Heart left ventricle (tissue), 16 donors: ENCODE measurements at regions of chr2 and their contacts with region 1.

Region 1: DNA sequence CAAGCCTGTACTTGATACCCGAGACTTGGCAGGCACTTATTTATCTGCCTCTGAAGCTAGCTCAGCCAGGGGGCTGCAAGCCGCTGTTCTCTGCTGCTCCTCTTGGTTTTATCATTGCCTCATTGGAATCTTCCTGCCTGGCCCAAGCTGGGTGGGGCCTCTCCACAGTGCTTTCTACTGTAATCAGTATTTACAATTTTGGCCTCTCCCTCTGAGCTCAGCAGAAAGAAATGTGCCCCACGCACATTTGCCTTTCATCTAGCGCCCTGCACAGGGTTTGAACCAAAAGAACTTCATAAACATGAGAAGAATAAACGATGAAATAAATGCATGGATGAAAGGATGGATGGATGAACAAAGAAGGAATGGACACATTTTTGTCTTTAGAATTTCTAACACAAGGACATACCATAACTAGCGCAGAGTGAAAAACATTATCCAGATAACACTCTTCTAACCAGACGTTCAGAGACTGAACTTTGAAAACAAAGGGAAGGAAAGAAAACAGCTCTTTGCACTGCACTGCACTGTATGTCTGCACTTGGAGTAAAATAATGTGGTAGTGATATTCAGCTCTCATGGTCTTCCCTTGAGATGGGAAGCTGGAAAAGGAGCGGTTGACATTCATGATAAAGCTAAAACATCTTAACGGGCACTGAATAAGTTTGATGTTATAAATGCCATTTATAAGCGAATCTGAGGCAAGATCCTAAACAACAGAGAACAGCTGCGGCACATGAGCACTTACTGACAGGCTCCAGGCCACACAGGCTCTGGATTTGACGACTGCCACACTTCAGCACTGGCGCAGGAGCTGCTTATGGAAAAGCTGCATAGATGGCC is 86.8 kb upstream of the SP3 start:
- DNase-seq: peak in 2 of 5 donors; percentile 31 to 45
- ATAC-seq: peak; percentile 65 to 89 (median 82)
- H3K4me3 ChIP-seq: peak overlapping the region in 1 of 12 donors; percentile 24
- H3K27ac ChIP-seq: peak overlapping the region in 6 of 12 donors; percentile 18 to 49 (median 40)
- H3K4me1 ChIP-seq: peaks cover 0 to 30% (median 16%) of the 10 kb centered on the region in 12 donors
- H3K27me3 ChIP-seq: no peaks in the 10 kb centered on the region
- CTCF ChIP-seq: no peak
- POLR2A ChIP-seq: no peak

Region 2: DNA sequence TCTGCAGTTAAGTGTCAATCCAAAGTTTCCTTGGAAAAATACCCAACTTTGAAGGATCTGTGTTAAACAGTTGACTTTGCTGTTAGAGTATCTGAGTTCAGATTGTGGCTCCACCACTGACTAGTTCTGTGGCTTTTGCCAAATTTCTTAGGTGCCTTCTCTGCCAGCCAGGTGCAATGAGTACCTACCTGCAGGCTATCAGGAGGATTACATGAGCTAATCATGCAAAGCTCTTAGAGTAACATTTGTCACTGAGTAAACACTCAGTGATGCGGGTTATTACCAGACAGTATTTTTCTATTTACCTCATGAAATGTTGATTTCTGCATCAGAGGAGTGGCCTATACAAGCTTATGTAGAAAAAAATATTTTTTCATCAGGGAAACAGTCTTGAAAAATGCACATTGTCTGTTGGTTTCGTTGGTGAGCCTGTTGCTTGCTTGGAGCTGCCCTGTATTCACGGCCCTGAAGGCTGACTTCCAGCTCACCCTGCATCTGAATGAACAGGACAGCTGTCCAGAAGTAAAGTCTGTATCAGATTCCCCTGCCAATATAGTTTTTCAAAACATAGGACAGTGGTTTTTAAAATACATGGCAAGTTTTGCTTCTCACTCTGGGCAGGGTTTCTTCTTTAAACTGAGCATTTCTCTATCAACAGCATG is 462.2 kb before region 1 on chr2:
- intact Hi-C with region 1: loop called in 1 of 10 experiments (anchors 10 kb)
- DNase-seq: no peak
- ATAC-seq: peak; percentile 37 to 57 (median 43)
- H3K4me3 ChIP-seq: peak overlapping the region in 1 of 12 donors; percentile 25
- H3K27ac ChIP-seq: peak overlapping the region in 9 of 12 donors; percentile 31 to 68 (median 51)
- H3K4me1 ChIP-seq: peaks cover 0 to 15% (median 4%) of the 10 kb centered on the region in 12 donors
- H3K27me3 ChIP-seq: no peaks in the 10 kb centered on the region
- CTCF ChIP-seq: no peak
- POLR2A ChIP-seq: no peak

Region 3: DNA sequence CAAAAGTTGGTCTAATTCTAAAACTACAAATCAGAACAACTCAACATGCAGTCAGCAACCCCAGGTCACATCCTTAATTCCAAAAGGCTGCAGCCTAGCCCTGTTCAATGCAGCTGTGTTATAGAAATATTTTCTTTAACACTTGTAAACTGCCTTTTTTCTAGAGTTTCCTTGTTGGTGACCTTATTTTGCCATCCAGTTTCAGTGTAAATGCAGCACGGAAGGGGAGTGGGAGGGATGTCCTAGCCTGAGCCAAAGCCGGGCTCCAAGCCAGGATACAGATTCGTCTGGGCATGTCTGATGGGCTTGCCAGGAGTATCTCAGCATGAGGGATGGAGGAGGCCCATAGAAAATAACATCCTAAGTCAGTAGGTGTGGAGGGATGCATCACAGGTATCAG is 69.0 kb before region 1 on chr2:
- intact Hi-C with region 1: no loop called
- DNase-seq: peak in 4 of 5 donors; percentile 36 to 61 (median 57)
- ATAC-seq: peak in 3 of 4 donors; percentile 61 to 75 (median 65)
- H3K4me3 ChIP-seq: no peak overlapping the region
- H3K27ac ChIP-seq: peak overlapping the region in 1 of 12 donors; percentile 10
- H3K4me1 ChIP-seq: peaks cover 0 to 68% (median 27%) of the 10 kb centered on the region in 12 donors
- H3K27me3 ChIP-seq: no peaks in the 10 kb centered on the region
- CTCF ChIP-seq: no peak
- POLR2A ChIP-seq: no peak